Activated CD4-positive, alpha-beta memory T cell treated with anti-CD3 and anti-CD28 coated beads, Interleukin-2, amount 10 ng/mL, durations not matched to agents 7 days and 5 days (primary cell): ENCODE measurements at regions of chr5 and their contacts with region 1.

Region 1: GRCh38 chr5:181191529-181192394 is 13.2 kb downstream of the TRIM7 start:
- DNase-seq: peak; percentile 97
- H3K4me3 Mint-ChIP-seq: peak overlapping the region; percentile 94
- H3K27ac Mint-ChIP-seq: peak overlapping the region; percentile 95
- H3K4me1 Mint-ChIP-seq: peaks cover 32% of the 10 kb centered on the region
- H3K27me3 Mint-ChIP-seq: peaks cover 4% of the 10 kb centered on the region

Region 2: GRCh38 chr5:181100121-181101015 is 91.4 kb before region 1 on chr5:
- CTCF ChIA-PET with region 1: no interaction called
- POLR2A ChIA-PET with region 1: no interaction called
- DNase-seq: no peak
- H3K4me3 Mint-ChIP-seq: no peak overlapping the region
- H3K27ac Mint-ChIP-seq: no peak overlapping the region
- H3K4me1 Mint-ChIP-seq: peaks cover 7% of the 10 kb centered on the region
- H3K27me3 Mint-ChIP-seq: peaks cover 32% of the 10 kb centered on the region

Region 3: DNA sequence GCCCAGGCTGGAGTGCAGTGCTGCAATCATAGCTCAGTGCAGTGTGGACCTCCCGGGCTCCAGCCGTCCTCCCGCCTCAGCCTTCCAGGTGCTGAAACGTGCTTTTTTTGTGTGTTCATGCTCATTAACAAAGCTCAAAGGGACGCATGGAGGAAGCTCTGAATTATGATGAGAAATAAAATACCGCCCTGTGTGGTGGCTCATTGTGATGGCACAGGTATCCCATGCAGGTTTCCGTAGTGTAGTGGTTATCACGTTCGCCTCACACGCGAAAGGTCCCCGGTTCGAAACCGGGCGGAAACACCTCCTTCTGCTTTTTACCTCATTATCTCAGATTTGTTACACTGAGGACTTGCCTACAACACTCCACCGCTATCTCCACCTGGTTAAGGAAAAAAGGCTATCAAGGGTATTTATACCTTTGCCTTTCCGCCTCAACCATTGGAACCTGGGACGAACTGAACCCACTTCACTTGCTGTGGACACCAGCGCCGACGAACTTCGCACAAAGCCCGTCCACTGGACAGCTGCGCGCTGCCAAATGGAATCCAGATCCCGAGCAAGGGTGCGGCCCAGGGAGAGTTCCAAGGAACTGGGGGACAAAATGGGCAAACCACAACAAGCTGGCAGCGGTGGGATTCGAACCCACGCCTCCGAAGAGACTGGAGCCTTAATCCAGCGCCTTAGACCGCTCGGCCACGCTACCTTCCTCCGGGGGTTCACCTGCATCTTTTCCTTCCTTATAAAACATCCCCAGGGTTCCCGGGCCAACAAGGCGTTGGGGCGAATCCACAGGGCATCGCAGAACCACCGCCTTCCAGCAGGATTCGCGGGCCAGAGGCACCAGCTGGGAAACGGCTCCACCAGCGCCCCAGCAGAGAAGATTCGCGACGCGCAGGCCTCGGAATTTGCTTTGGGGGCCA is 18.1 kb before region 1 on chr5:
- CTCF ChIA-PET with region 1: interaction called, 13 read pairs
- POLR2A ChIA-PET with region 1: interaction called, 14 read pairs
- DNase-seq: peak; percentile 72
- H3K4me3 Mint-ChIP-seq: peak overlapping the region; percentile 78
- H3K27ac Mint-ChIP-seq: peak overlapping the region; percentile 80
- H3K4me1 Mint-ChIP-seq: peaks cover 46% of the 10 kb centered on the region
- H3K27me3 Mint-ChIP-seq: peaks cover 54% of the 10 kb centered on the region

Region 4: DNA sequence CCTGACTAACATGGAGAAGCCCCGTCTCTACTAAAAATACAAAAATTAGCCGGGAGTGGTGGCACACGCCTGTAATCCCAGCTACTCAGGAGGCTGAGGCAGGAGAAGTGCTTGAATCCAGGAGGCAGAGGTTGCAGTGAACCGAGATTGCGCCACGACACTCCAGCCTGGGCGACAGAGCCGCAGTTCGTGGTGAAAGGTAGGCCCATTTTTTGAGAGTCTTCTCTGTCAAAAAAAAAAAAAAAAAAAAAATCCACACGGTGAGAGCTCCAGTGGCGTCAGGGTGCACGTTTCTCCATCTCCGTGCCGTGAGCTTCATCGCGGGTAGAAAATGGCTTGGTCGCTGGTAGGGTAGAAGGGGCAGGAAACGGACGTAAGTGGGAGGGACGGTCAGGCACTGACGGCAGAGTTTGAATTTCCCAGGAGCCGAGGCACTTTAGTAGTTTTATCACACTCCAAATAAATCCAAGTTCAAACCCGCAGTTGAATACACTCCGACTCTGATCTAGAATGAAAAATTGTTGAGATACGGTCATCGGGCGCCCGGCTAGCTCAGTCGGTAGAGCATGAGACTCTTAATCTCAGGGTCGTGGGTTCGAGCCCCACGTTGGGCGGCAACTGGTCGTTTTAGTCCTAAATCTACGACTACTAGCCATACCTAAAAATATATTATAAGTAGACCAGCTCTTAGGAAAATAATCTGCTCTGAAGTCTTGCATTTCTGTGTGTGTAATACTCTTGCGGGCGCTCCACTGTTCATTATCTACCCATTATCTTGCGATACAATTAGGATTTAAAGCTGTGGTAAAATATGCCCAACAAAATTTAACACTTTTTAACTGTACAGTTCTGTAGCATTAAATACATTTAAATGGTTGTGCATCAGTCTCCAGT is 15.7 kb after region 1 on chr5:
- CTCF ChIA-PET with region 1: interaction called, 29 read pairs
- POLR2A ChIA-PET with region 1: interaction called, 149 read pairs
- DNase-seq: peak; percentile 80
- H3K4me3 Mint-ChIP-seq: peak overlapping the region; percentile 81
- H3K27ac Mint-ChIP-seq: peak overlapping the region; percentile 85
- H3K4me1 Mint-ChIP-seq: peaks cover 37% of the 10 kb centered on the region
- H3K27me3 Mint-ChIP-seq: peaks cover 32% of the 10 kb centered on the region

Region 5: GRCh38 chr5:181217111-181217802 is 25.5 kb after region 1 on chr5:
- CTCF ChIA-PET with region 1: interaction called, 11 read pairs
- POLR2A ChIA-PET with region 1: interaction called, 100 read pairs
- DNase-seq: peak; percentile 61
- H3K4me3 Mint-ChIP-seq: peak overlapping the region; percentile 87
- H3K27ac Mint-ChIP-seq: peak overlapping the region; percentile 89
- H3K4me1 Mint-ChIP-seq: peaks cover 56% of the 10 kb centered on the region
- H3K27me3 Mint-ChIP-seq: peaks cover 7% of the 10 kb centered on the region

Region 6: GRCh38 chr5:181223058-181223728 is 31.4 kb after region 1 on chr5 and contains the start of gene TRIM41:
- CTCF ChIA-PET with region 1: interaction called, 11 read pairs
- POLR2A ChIA-PET with region 1: interaction called, 100 read pairs
- DNase-seq: peak; percentile 98
- H3K4me3 Mint-ChIP-seq: peak within 1 kb of the TSS; percentile 99
- H3K27ac Mint-ChIP-seq: peak within 1 kb of the TSS; percentile 100
- H3K4me1 Mint-ChIP-seq: peaks cover 69% of the 10 kb centered on the region
- H3K27me3 Mint-ChIP-seq: peaks cover 4% of the 10 kb centered on the region
- total RNA-seq, gene TRIM41: 42.4 to 43.7 TPM

Region 7: GRCh38 chr5:181243512-181244343 is 52.0 kb after region 1 on chr5 and contains the start of gene RACK1:
- CTCF ChIA-PET with region 1: interaction called, 3 read pairs
- POLR2A ChIA-PET with region 1: interaction called, 76 read pairs
- DNase-seq: peak; percentile 91
- H3K4me3 Mint-ChIP-seq: peak within 1 kb of the TSS; percentile 97
- H3K27ac Mint-ChIP-seq: peak within 1 kb of the TSS; percentile 92
- H3K4me1 Mint-ChIP-seq: peaks cover 67% of the 10 kb centered on the region
- H3K27me3 Mint-ChIP-seq: no peaks in the 10 kb centered on the region
- total RNA-seq, gene RACK1: 1,749 to 1,772 TPM